ENCODE measurements at regions of chr7 and their contacts with region 1.

Region 1: GRCh38 chr7:93461350-93461749 is 113.2 kb downstream of the CALCR start:
- H3K4me3 Mint-ChIP-seq: no peak overlapping the region
- H3K27ac Mint-ChIP-seq: no peak overlapping the region
- H3K4me1 Mint-ChIP-seq: no peaks in the 10 kb centered on the region
- H3K27me3 Mint-ChIP-seq: no peaks in the 10 kb centered on the region

Region 2: DNA sequence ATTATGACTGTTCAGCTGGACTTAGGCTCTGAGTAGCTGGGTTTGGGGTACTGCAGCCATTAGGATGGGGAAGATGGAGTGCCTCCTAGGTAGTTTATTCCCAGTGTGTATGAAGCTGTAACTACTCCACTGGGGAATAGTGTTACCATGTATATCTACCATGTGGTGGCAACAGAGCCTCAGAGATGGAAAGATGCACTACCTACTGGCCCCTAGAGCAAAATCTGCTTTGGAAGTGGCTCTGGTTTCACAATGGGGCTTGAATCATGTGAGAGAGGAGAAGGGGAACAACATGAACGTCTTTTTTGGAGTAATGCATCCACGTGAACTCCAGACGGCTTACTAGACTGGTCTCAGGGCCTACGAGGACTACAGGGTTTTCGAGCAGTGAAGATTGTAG is 54.1 kb before region 1 on chr7:
- intact Hi-C with region 1: no loop called
- H3K4me3 Mint-ChIP-seq: no peak overlapping the region
- H3K27ac Mint-ChIP-seq: no peak overlapping the region
- H3K4me1 Mint-ChIP-seq: no peaks in the 10 kb centered on the region
- H3K27me3 Mint-ChIP-seq: no peaks in the 10 kb centered on the region

Region 3: DNA sequence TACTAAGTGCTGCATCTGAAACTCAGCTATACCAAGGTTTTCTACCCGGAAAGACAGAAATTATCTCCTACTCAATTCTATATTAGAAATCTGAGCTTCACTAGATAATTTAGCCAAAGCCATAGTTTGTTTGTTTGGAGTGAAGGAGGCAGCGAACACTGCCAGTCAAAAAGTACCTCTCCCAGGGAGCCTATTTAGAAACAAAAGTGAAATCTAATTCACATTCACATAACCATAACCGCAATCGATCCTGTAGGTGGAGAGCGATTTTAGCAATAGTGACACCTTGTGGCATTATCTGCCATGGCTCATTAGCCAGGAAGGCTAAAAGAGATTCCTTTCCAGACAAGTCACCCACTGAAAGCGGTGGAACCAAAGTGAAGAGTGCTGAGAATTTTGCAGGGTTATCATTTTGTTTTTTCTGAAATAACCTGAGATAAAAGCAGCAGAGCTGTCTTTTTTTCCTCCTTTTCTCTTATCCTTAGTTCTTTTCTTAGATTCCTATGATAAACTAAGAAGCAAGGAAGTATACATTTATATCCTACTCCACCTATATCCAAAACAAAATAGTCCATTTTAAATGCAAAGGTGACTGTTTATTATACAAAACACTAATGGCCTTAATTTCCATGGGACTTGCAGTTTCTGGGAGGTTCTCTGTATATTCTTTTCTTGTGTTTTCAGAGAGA is 626.5 kb after region 1 on chr7:
- intact Hi-C with region 1: loop called (anchors 2 kb)
- H3K4me3 Mint-ChIP-seq: no peak overlapping the region
- H3K27ac Mint-ChIP-seq: no peak overlapping the region
- H3K4me1 Mint-ChIP-seq: peaks cover 18% of the 10 kb centered on the region
- H3K27me3 Mint-ChIP-seq: peaks cover 38% of the 10 kb centered on the region

Measured in dendritic cell treated with granulocyte-macrophage colony-stimulating factor and Interleukin-4, amounts not matched to agents 40 ng/mL and 50 ng/mL, for 4 days (primary cell).